ENCODE measurements at regions of chr9 and their contacts with region 1.

Region 1: DNA sequence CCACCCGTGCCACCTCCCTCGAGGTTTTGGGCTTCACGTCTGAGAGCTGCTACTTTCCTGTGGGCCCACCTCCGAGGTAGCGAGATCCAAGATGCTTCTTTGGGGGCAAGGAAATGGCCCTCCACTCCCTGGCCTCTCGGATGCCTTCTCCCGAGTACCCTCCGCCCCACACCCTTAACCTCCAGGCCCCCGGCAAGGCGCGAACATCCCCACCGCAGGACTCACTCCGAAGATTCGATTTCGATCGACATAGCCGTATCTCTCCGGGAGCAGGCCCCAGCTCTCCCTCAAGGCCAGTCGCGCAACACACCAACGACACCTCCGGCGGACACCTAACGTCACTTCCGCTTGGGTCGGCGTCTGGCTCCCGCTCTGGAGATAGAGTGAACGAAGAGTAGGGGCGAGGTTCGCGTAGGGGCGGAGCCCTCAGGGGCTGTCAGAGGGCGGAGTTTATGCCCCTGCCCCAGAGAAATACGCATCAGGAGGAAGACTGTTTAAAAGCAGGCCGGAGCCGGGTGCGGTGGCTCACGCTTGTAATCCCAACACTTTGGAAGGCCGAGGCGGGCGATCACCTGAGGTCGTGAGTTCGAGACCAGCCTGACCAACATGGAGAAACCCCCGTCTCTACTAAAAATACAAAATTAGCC is at the start of gene SMU1:
- DNase-seq: peak; percentile 92 to 98 (median 97)
- ATAC-seq: peak; percentile 96 to 99 (median 98)
- H3K4me3 ChIP-seq: peak within 1 kb of the TSS; percentile 38 to 75 (median 59)
- H3K27ac ChIP-seq: peak within 1 kb of the TSS; percentile 75 to 95 (median 90)
- H3K4me1 ChIP-seq: peaks cover 0 to 6% (median 1%) of the 10 kb centered on the region in 3 donors
- H3K27me3 ChIP-seq: no peaks in the 10 kb centered on the region
- CTCF ChIP-seq: no peak
- total RNA-seq, gene SMU1: 4.5 to 10.3 (median 7.0) TPM

Region 2: GRCh38 chr9:32968101-32969011 is 108.1 kb before region 1 on chr9:
- intact Hi-C with region 1: no loop called
- DNase-seq: peak in 4 of 6 donors; percentile 18 to 82 (median 46)
- ATAC-seq: peak in 3 of 4 donors; percentile 59 to 72 (median 70)
- H3K4me3 ChIP-seq: no peak overlapping the region
- H3K27ac ChIP-seq: no peak overlapping the region
- H3K4me1 ChIP-seq: no peaks in the 10 kb centered on the region
- H3K27me3 ChIP-seq: no peaks in the 10 kb centered on the region
- CTCF ChIP-seq: peak; percentile 64 to 88 (median 73)

Region 3: GRCh38 chr9:33129271-33129885 is 52.9 kb after region 1 on chr9:
- intact Hi-C with region 1: no loop called
- DNase-seq: no peak
- ATAC-seq: no peak
- H3K4me3 ChIP-seq: no peak overlapping the region
- H3K27ac ChIP-seq: peak overlapping the region; percentile 45 to 60 (median 54)
- H3K4me1 ChIP-seq: peaks cover 6 to 19% (median 7%) of the 10 kb centered on the region in 3 donors
- H3K27me3 ChIP-seq: no peaks in the 10 kb centered on the region
- CTCF ChIP-seq: no peak

Region 4: GRCh38 chr9:33139421-33140228 is 63.1 kb after region 1 on chr9:
- intact Hi-C with region 1: no loop called
- DNase-seq: peak in 4 of 6 donors; percentile 32 to 56 (median 46)
- ATAC-seq: peak; percentile 36 to 68 (median 64)
- H3K4me3 ChIP-seq: no peak overlapping the region
- H3K27ac ChIP-seq: peak overlapping the region in 3 of 4 donors; percentile 0 to 50 (median 47)
- H3K4me1 ChIP-seq: peaks cover 13 to 23% (median 16%) of the 10 kb centered on the region in 3 donors
- H3K27me3 ChIP-seq: no peaks in the 10 kb centered on the region
- CTCF ChIP-seq: no peak

Region 5: DNA sequence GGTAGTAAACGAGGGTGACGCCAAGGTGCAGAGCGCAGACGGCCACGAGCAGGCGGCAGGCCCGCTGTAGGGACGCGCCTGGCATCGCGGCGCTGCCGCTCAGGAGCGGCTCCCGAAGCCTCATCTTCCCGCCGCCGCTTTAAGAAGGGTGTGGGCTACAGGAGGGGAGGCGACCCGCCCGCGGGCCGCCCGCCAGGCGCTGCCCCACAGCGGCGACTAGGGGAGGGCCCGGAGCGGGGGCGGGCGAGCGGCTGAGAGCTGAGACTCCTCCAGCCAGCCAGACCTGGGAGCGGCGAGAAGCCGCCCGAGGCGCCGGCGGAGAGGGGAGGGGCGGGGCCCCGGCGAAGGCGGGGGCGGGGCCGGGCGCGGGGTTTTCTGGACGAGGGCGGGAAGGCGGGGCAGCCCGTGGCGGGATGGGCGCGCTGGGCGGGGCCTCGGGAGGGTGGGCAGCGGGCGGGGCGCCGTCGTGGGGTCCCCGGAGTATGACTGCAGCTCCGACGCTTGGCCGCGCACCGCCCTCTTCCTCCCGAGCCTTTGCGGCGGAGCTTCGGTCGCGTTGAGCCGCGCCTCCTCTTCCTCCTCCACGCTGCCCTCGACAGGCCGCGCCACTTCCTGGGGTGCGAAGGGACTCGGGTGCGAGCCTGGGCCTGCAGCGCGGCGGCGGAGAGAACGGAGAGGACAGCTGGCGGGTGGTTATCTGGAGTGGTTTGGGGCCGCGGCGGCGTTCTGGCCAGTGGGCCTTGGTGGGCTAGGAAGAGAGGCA is 90.7 kb after region 1 on chr9 and contains the start of gene B4GALT1:
- intact Hi-C with region 1: loop called in 1 of 3 experiments (anchors 10 kb)
- DNase-seq: peak; percentile 91 to 99 (median 95)
- ATAC-seq: peak; percentile 78 to 86 (median 82)
- H3K4me3 ChIP-seq: peak within 1 kb of the TSS; percentile 74 to 93 (median 90)
- H3K27ac ChIP-seq: peak within 1 kb of the TSS; percentile 78 to 97 (median 93)
- H3K4me1 ChIP-seq: peaks cover 36 to 56% (median 38%) of the 10 kb centered on the region in 3 donors
- H3K27me3 ChIP-seq: no peaks in the 10 kb centered on the region
- CTCF ChIP-seq: no peak
- total RNA-seq, gene B4GALT1: 16.1 to 54.2 (median 33.7) TPM

Region 6: DNA sequence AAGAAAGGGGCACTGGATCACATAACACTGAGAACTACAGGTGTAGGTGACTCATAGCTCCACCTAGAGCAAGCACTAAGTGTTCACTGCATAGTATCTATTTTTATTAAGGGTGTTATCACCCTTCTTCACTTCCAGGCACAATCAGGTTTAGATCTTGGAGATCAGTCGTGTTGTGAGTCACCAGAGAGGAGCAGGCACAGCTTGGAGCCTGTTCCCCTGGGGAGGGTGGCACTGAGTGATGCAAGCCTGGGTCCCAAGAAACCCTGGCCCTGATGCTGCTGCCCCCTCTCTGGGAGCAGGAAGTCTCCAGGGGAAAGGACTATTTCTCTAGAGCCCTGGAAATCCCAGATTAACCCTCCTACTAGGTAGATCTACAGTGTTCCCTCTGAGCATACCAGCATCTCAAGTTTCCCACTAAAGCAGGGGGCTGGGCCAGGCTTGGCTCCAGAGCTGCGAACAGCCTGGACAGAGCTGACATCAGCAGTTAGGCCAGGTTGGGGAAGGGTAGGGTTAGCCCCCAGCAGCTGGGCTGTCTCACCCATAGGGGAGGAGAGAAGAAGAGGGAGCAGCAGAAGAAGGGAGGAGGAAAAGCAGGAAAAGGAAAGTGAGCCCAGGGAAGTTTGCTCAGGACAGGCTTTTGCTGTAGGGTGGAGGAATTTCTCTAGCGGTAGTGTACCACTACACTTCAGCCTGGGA is 135.4 kb after region 1 on chr9:
- intact Hi-C with region 1: loop called in 1 of 3 experiments (anchors 10 kb)
- DNase-seq: no peak
- ATAC-seq: peak in 2 of 4 donors; percentile 43 to 77
- H3K4me3 ChIP-seq: no peak overlapping the region
- H3K27ac ChIP-seq: no peak overlapping the region
- H3K4me1 ChIP-seq: no peaks in the 10 kb centered on the region
- H3K27me3 ChIP-seq: no peaks in the 10 kb centered on the region
- CTCF ChIP-seq: no peak

Region 7: DNA sequence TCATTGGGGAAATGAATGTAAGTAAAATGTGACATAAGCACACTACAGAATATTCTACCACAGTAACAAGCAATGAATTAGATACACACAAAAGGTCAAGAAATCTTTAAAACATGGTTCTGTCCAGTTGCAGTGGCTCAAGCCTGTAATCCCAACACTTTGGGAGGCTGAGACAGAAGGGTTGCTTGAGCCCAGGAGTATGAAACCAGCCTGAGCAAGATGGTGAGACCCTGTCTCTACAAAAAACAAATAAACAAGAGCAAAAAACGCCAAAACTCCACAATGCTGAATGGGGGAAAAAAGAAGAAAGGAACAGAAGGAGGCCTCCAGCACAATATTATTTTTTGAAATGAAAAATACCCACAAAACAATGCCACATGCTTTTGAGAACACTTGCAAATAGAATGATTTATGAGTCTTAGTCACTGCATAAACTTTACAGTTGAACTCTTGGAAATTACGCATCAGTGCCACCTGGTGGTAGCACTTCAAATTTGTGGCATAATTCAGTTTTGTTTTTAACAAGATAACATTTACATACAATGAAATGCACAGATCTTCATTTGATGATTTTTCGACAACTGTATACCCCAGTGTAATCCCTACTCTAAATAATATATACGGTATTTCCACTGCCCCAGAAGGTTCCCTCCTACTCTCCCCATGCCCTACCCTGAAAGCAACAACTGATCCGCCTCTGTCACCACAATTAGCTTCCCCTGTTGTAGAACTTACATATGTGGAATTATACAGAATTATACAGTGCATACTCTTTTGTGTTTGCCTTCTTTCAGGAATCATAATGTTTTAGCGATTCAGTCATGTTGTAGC is 149.1 kb after region 1 on chr9:
- intact Hi-C with region 1: loop called in 2 of 3 experiments (anchors 5 kb)
- DNase-seq: peak in 3 of 6 donors; percentile 41 to 74 (median 42)
- ATAC-seq: peak; percentile 47 to 75 (median 70)
- H3K4me3 ChIP-seq: no peak overlapping the region
- H3K27ac ChIP-seq: no peak overlapping the region
- H3K4me1 ChIP-seq: peaks cover 0 to 11% (median 0%) of the 10 kb centered on the region in 3 donors
- H3K27me3 ChIP-seq: no peaks in the 10 kb centered on the region
- CTCF ChIP-seq: peak; percentile 41 to 65 (median 61)